B cell (primary cell): ENCODE measurements at regions of chr1 and their contacts with region 1.

Region 1: DNA sequence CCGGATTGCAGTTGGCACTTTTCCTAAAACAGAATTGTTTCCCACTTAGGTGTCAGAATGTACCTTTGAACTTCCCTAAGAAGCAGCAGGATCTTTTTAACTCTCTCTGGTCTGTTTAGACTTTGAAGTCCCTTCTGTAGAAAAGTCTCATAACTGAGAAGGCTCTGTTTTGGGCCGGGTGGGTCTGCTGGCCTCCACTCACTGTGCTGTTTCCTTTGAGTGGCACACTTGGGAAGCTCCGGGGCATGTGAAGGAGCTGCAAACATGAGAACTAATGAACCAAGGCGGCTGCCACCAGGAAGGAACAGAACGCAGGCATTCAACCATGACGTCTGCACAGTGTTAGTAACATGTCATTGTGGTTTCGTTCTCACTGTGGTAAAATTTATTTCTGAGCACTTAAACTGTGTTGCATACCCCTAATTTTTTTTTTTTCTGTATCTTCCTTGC is 19.5 kb upstream of the NCMAP start:
- DNase-seq: peak; percentile 85
- ATAC-seq: peak; percentile 76
- H3K4me3 ChIP-seq: peak overlapping the region in 3 of 5 experiments; percentile 19 to 45 (median 20)
- H3K4me3 Mint-ChIP-seq: peak overlapping the region; percentile 83
- H3K27ac ChIP-seq: peak overlapping the region; percentile 74 to 97
- H3K27ac Mint-ChIP-seq: peak overlapping the region; percentile 98
- H3K4me1 ChIP-seq: peaks cover 54 to 60% of the 10 kb centered on the region in 2 donors
- H3K4me1 Mint-ChIP-seq: peaks cover 68% of the 10 kb centered on the region
- H3K27me3 ChIP-seq: no peaks in the 10 kb centered on the region
- H3K27me3 Mint-ChIP-seq: no peaks in the 10 kb centered on the region
- CTCF ChIP-seq: no peak

Region 2: DNA sequence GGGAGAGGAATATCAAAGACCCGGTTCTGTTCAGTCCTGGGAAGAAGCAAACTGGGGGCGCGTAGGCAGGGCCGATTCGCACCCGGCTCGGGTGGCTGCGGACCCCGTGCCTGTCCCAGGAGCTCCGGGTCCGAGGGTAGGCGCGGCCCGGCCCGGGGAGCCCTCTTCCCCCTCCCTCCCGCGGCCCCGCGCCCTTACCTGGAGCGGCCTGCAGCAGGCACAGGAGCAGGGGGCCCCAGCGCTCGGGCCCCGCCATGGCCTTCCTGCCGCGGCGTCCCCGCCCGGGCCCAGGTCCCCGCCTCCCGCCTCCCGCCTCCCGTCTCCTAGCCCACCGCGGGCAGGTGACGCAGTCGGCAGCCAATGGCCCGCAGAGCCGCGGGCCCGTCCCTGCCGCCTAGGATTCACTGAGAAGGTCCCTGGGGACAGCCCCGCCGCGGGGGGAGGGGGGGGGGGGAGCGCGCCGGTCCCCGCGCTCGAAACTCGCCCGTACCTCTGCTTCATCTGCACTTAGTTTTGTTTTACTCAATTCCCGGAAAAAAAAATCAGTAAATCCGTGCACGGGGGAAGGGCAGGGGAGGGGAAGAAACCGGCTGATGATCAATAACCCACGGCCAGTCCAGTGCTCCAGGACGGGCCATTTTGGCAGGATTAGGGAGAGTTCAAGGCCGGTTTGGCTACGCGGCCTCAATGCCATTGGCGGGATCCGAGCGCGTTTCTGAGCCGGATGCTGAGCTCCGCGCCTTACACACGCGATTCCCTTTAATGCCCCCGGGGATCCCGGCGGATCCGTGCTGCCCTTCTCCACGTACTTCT is 349.2 kb before region 1 on chr1 and contains the start of gene IFNLR1:
- CTCF ChIA-PET with region 1: no interaction called
- POLR2A ChIA-PET with region 1: no interaction called
- intact Hi-C with region 1: loop called (anchors 2 kb)
- DNase-seq: peak; percentile 87
- ATAC-seq: peak; percentile 57
- H3K4me3 ChIP-seq: peak within 1 kb of the TSS; percentile 65 to 85 (median 77)
- H3K4me3 Mint-ChIP-seq: peak within 1 kb of the TSS; percentile 95
- H3K27ac ChIP-seq: peak within 1 kb of the TSS; percentile 82
- H3K27ac Mint-ChIP-seq: peak within 1 kb of the TSS; percentile 93
- H3K4me1 ChIP-seq: peaks cover 69 to 78% of the 10 kb centered on the region in 2 donors
- H3K4me1 Mint-ChIP-seq: peaks cover 83% of the 10 kb centered on the region
- H3K27me3 ChIP-seq: no peaks in the 10 kb centered on the region
- H3K27me3 Mint-ChIP-seq: no peaks in the 10 kb centered on the region
- CTCF ChIP-seq: no peak
- total RNA-seq, gene IFNLR1: 38.0 and 39.7 TPM in 2 replicates

Region 3: GRCh38 chr1:24481101-24481500 is 55.3 kb before region 1 on chr1:
- CTCF ChIA-PET with region 1: interaction called, 6 read pairs
- POLR2A ChIA-PET with region 1: no interaction called
- intact Hi-C with region 1: loop called (anchors 10 kb)
- DNase-seq: peak; percentile 71
- ATAC-seq: peak; percentile 90
- H3K4me3 ChIP-seq: peak overlapping the region in 1 of 5 experiments; percentile 59
- H3K4me3 Mint-ChIP-seq: peak overlapping the region; percentile 75
- H3K27ac ChIP-seq: peak overlapping the region; percentile 52 to 75
- H3K27ac Mint-ChIP-seq: peak overlapping the region; percentile 92
- H3K4me1 ChIP-seq: peaks cover 17 to 22% of the 10 kb centered on the region in 2 donors
- H3K4me1 Mint-ChIP-seq: peaks cover 27% of the 10 kb centered on the region
- H3K27me3 ChIP-seq: no peaks in the 10 kb centered on the region
- H3K27me3 Mint-ChIP-seq: no peaks in the 10 kb centered on the region
- CTCF ChIP-seq: no peak